GM10248 (cell line): ENCODE measurements at regions of chr10 and their contacts with region 1.

Region 1: DNA sequence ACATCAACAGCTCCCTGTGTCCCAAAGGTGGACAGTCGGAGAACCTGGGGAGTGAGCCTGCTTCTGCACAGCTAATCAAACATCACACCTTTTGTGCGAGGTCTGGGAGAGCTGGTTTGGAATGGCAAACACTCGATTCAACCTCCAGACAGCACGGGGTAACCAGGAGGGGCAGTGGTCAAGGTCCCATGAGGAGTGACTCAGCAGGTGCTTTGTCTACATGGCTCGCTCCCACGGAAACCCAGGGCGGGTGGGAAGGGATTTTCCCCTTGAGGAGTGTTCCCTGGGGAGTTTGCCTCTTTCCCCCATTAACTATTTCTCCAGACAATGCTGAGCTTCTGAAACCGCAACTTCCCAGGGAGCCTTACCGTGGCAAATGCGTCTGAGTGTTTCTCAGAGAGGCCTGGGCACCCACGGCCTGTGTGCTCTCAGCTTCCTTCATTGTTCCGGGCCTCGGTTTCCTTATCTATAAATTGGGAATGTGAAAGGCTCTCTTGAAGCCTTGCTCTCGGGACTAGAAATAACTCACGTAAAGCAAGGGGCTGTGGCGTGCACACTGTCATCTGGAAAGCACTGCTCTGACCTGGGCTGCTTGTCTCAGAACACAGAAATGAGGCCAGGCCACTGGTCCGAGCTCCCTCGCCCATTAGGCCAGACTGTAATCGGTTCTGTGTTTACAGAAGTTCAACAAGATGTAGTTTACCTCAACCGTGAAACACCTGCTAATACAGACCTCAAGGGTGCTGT is 14.0 kb upstream of the GTPBP4 start:
- DNase-seq: no peak
- CTCF ChIP-seq: no peak

Region 2: GRCh38 chr10:931416-932318 is 42.5 kb before region 1 on chr10 and contains the start of gene LARP4B:
- CTCF ChIA-PET with region 1: no interaction called
- POLR2A ChIA-PET with region 1: no interaction called
- DNase-seq: peak; percentile 98
- CTCF ChIP-seq: no peak

Region 3: DNA sequence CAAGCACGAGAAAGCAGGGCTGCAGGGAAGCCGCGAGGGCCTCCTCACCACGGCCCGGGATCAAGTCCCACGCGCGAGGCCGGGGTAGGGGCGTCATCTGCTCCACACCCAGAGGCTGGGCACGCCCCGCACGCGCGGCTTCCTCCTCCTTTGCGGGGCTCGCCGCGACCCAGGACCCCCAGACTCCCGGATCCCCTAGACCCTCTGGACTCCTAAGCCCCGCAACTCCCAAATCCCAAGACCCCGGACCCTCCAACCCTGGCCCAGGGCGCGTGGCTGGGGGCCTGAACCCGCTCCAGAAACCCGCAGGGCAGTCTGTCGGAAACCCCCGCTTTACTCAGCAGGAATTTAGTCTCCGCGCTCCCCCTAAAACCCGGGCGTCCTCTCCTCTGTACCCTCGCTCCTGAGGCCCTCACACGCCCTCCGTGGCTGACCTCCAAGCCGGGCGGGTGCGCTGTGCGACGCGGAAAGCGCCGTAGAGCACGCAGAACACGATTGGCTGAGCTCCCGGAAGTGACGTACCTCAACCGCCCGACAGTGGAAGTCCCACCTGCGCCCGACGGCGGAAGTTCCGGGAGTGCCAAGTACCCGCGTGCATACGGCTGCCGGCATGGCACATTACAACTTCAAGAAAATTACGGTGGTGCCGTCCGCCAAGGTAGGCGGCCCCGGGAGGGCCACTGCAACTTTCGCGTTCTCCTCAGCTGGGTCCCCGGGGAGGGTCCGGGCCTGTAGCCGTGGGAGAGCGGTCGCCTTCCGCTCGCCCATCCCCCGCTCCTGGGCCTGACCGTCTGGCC is 13.9 kb after region 1 on chr10 and contains the start of gene GTPBP4:
- CTCF ChIA-PET with region 1: interaction called, 11 read pairs
- POLR2A ChIA-PET with region 1: interaction called, 8 read pairs
- DNase-seq: peak; percentile 100
- CTCF ChIP-seq: peak; percentile 86

Region 4: DNA sequence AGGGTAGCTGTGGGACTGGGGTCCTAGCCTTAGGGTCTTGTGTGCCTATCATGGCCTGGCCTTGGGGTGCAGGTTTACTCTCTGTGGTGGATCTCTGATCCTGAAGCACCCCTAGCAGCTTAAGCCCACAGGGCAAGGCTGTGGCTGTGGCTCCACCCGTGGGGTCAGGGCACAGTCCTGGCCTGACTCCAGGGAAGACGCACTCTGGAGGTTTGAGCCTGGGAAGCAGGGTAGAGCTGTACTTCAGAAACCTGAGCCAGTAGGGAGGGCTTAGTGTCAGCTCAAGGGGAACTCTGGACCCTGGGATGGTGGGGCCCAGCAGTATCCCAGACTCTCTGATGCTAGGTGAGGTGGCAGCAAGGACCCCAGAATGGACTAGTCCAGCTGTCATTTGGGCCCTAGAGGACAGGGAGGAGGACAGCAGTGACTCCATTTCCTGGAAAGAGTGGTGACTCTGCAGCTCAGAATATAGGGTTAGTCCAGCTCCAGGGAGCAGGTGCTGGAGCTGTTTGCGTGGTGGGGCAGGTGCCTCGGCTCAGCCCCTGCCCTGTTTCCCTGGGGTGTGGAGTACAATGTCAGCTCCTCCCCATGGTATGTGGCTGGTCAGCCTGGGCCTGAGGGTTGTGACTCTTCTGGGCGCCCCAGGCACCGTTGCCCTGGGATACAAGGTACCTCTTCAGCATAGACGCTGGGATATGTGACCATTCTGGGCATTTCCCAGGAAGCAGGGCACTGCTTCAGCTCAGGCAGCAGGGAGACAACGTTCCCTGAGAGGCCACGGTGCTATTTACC is 29.9 kb after region 1 on chr10:
- CTCF ChIA-PET with region 1: no interaction called
- POLR2A ChIA-PET with region 1: no interaction called
- DNase-seq: no peak
- CTCF ChIP-seq: no peak